ENCODE measurements at regions of chrX and their contacts with region 1.

Region 1: GRCh38 chrX:68273887-68274286 is 159.4 kb downstream of the OPHN1 start:
- DNase-seq: no peak

Region 2: GRCh38 chrX:68175562-68175961 is 98.3 kb before region 1 on chrX:
- intact Hi-C with region 1: no loop called
- DNase-seq: no peak

Region 3: DNA sequence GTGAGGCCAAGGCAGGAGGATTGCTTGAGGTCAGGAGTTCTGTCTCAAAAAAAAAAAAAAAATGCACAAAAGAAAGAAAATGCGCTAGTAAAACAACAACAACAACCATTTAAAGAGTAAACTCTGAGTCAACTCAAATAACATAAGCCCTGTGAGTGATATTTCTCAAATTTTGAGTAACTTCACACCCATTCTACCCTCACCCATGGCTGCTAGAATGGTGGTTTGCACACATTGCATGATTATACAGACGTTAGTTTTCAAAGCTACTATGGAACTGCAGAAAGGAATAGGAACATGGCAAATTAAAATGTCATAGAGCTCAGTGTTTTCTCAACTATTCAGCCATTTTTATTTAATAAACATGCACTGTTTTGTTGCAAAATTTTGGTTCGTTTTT is 13.5 kb after region 1 on chrX:
- intact Hi-C with region 1: loop called in 1 of 2 experiments (anchors 1 kb)
- DNase-seq: no peak

Region 4: DNA sequence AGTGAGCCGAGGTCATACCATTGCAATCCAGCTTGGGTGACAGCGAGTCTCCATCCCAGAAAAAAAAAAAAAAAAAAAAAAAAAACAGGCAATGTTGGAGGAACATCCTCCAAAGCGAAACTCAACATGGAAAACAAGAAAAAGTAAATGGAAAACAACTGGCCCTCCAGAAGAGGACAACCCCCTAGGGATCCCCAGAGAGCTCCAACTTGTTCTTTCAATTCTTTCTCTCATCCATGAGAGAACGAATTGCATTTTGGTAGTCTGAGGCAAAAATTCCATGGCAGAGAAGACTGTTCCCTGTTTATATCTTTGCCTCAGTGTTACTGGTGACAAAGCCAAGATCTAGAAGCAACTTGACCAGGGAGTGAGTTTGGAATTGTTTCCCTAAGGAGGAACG is 109.7 kb after region 1 on chrX:
- intact Hi-C with region 1: no loop called
- DNase-seq: no peak